Cardiac septum (tissue), 1 donor: ENCODE measurements at regions of chr10 and their contacts with region 1.

Region 1: DNA sequence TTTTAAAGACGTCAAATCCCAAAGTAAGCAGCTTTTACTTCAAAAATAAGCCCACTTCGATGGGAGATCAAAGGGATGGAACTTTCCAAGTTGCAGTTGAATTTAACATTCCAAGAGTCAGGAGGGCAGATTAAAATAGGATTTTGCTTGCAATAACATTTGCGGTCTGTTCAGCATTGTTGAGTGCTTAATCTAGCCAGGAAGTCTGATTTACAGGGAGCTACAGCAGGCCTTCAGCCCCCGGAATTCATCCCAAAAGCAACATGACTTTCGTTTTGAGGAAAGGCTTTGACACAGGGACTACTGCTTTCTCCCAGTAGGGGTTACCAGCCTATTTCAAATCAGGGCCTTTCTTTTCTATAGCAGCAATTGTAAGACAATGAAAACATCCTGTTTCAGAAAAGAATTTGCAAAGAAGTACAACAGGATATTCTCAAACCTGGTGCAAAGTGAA is 279.6 kb upstream of the PITRM1 start:
- DNase-seq: no peak

Region 2: GRCh38 chr10:3239066-3239919 is 212.9 kb before region 1 on chr10:
- intact Hi-C with region 1: loop called (anchors 5 kb)
- DNase-seq: peak; percentile 91

Region 3: DNA sequence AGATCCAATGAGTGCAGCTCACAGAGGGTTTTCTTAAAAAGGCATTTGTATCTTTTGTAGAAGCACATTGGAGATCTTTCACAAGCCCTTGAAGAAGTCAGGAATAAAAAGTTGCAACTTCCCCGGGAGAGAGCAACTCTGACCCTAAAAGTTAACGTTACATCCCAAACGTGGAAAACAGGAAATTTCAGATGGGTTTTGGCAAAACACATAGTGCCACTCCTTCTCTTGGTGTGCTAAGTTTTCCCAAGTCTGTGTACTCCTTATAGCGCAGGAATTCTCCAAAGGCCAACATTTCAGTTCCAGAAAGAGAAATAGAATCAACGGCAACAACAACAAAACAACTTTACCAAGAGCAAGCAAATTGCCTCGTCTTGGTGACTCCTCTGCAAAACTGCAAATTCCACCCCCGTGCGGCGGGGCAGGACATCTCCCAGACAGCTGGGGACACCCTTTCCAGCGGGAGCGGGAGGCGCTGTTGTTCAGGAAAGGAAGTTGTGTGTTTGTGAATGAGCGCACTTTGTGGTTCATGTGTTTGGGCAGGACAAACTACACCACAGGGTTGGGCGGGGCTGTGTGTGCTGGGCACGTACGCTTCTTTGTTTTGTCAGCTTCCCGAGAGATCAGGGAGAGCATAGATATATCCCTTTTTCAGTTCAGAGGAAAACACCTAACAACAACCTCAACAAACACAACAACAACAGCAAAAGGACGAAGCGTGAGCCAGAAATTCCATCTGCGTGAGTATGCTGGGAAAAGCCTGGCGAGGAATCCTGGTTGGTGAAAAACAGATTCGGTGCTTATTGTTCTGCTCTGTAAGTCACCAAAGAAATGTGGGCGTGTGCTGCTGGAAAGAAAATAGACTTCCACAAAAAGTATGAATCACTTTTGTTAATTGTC is 15.1 kb after region 1 on chr10:
- intact Hi-C with region 1: loop called (anchors 2 kb)
- DNase-seq: peak; percentile 89

Region 4: DNA sequence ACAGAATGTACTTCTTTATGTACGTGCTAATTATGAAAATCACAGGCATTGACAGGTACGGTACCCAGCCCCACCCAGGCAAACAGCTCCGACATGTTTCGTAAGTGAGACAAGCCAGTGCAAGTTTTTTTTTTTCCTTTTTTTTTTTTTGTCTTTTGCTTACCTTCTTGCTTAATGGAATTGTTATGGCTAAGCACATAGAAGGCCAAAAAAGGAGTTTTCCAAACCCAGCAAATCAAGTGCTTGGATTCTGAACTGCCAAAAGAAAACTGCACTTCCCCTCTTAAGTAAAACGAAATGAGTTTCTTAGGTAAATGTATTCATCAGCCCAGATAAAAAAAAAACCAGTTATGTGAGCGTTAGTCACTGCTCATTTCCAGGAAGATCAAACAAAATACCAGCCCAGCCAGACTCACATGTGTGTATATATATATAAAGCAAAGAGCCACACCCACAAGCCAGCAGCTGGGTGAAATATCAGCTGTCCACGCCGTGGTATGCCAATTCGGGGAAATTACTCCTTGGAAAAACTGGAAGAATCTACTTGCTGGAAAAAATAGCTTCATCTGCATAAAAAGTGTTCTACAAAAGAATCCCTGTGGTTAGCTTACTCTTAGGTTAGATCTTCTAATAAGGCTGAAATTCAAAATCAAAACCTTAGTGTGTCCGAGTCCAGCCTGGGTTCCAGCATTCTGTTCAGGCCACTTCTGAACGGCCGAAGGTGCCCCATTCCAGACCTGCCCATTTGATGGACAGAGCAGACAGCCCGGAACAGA is 324.8 kb after region 1 on chr10:
- intact Hi-C with region 1: loop called (anchors 5 kb)
- DNase-seq: no peak